ENCODE measurements at regions of chr13 and their contacts with region 1.

Region 1: GRCh38 chr13:73417015-73417623 is 358.3 kb downstream of the KLF5 start:
- DNase-seq: peak; percentile 12
- CTCF ChIP-seq: no peak

Region 2: GRCh38 chr13:72194556-72194955 is 1222.6 kb before region 1 on chr13:
- in situ Hi-C with region 1: no loop called
- DNase-seq: no peak
- CTCF ChIP-seq: no peak

Region 3: GRCh38 chr13:72839831-72840426 is 577.2 kb before region 1 on chr13:
- in situ Hi-C with region 1: loop called (anchors 25 kb)
- DNase-seq: peak; percentile 55
- CTCF ChIP-seq: peak; percentile 70

Region 4: DNA sequence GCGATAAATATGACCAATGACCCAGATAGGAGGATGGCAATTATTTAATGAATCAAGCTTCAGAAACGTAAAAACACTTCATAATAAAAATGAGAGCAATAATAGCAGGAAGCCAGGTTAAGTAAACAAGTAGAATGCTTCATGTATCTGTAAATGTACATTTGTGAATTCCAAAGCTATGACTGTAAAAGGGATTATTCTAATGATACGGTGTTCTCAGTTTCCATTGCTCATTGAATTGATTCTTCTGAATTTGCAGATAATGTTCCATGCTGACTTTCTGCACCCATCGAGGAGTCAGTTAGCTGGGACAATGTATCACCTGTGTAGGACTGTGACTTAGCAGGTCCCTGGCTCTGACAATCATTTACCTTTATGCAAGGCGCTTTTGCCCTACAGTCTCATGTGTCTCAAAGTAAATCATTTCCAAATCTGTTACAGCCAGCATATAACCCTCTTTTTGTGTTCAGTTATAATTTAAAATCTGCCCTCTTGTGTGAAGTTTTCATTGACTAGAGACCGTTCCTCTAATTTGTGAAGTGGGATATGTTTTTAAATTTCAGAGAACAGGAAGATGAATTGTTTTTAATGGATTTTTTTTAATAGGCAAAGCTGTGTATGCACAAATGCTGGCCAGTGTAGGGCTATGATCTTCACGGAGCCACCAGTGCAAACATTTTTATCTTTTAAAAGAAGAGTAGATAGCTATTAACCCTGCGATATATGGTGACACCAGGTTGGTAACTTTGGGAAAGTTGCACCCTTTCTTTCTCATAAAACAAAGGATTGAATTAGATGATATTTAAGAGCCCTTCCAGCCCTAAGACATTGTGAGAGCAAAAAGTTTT is 91.2 kb before region 1 on chr13:
- in situ Hi-C with region 1: no loop called
- DNase-seq: no peak
- CTCF ChIP-seq: no peak

Region 5: GRCh38 chr13:74316547-74316946 is 899.4 kb after region 1 on chr13:
- in situ Hi-C with region 1: no loop called
- DNase-seq: no peak
- CTCF ChIP-seq: no peak